Sciatic nerve (tissue), 2 donors: ENCODE measurements at regions of chr6 and their contacts with region 1.

Region 1: GRCh38 chr6:35977308-35977707 is 47.1 kb downstream of the SLC26A8 start:
- DNase-seq: no peak
- ATAC-seq: no peak

Region 2: DNA sequence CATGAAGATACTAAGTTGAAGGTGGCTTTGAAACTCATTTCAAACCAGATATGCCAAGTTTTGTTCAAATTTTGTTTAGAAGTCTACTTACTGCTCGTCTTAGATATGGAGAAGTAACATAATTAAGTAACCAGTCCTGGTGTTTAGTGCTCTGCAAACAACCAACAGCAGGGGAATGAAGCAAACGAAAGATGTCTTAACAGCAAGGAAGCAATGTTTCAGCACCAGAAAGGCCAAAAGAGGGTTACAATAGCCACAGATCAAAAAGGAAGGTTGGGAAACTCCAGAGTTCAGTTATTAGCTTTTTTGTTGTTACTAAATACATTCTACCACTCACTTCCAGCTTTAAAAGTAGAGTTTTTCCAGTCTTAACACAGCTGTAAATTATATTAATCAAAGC is 127.1 kb before region 1 on chr6:
- intact Hi-C with region 1: loop called (anchors 5 kb)
- DNase-seq: no peak
- ATAC-seq: no peak

Region 3: DNA sequence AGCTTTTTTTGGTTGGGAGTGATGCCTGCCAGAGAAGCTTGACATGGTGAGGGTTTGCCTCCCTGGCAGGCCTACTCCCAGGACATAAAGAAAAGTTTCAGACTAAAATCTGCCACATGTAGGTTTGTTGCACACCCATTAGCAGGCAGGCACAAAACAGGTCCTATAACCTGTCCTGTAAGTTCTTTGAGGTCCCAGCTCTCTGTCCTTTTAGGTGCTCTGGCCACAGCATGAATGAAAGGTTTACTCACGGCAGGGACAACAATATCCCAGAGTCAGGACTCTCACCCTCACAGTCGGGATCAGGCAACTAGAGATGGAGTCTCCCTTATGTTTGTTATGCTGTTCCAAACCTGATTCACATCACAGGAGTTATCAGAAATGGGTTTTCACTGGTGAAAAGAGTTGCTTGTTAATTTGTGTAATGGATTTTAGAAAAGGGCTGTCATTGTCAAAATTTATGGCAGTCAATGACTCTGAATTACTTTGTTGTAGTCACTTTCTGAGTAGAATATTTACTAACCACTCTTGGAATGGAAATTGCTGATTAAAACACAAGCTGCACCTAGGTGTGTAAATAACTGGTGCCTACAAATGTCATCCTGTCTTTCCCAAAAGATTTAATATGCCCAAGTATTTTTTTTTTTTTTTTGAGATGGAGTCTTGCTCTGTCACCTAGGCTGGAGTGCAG is 50.6 kb before region 1 on chr6:
- intact Hi-C with region 1: loop called (anchors 2 kb)
- DNase-seq: no peak
- ATAC-seq: no peak

Region 4: DNA sequence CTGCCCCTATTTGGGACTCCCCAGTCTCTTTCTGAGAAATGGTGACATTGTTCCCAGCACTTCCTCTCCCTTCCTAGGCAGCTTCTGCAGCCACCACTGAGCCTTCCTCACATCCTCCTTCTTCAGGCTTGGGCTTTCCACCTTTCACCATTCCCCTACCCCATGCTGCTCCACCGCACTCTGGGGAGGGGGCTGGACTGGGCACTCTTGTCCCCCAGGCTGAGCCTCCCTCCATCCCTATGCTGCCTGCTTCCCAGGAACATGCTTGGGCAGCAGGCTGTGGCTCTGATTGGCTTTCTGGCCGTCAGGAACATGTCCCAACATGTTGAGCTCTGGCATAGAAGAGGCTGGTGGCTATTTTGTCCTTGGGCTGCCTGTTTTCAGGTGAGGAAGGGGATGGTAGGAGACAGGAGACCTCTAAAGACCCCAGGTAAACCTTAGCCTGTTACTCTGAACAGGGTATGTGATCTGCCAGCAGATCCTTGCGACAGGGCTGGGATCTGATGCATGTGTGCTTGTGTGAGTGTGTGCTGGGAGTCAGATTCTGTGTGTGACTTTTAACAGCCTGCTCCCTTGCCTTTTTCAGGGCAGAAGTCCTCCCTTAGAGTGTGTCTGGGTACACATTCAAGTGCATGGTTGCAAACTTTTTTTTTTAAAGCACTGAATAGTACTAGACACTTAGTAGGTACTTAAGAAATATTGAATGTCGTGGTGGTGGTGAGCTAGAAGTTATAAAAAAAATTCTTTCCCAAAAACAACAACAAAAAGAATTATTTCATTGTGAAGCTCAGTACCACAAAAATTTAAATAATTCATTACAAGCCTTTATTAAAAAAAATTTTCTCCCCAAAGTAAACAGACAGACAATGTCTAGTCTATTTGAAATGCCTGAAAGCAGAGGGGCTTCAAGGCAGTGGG is 699.1 kb after region 1 on chr6:
- intact Hi-C with region 1: no loop called
- DNase-seq: peak; percentile 56
- ATAC-seq: no peak